Sigmoid colon (tissue), 7 donors: ENCODE measurements at regions of chr9 and their contacts with region 1.

Region 1: DNA sequence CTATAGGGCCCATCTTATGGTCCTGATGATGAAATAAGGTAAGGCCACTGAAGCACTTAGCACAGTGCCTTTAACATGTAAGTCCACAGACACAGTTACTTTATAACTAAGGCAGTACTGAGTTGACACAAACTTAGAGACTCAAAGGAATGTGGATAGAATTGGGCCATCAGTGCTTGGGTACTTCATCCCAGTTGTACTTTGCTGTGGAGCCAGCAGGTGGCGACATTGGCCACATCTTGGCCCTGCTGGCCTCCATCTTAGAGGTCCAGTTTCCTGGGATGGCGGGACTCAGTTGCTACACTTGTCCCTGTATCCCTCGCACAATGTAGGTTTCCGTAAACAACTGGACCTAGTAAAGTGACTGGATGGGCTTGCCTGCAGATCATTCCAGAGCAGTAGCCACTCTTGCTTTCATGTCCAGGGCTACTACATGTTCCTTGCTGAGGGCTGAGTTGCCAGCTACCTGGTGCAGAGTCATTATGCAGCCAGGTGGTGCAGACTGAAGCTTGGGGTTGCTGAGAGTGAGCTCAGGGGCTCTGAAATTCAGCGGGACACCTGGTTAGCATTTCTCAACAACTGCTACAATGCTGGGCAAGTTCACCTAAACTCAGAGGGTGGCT is 10.6 kb downstream of the MTAP start:
- DNase-seq: peak; percentile 80
- H3K4me3 ChIP-seq: no peak overlapping the region
- H3K27ac ChIP-seq: peak overlapping the region; percentile 35 to 52 (median 44)
- H3K4me1 ChIP-seq: peaks cover 0 to 30% (median 15%) of the 10 kb centered on the region in 4 donors
- H3K27me3 ChIP-seq: no peaks in the 10 kb centered on the region
- CTCF ChIP-seq: peak; percentile 65 to 79 (median 74)
- EP300 ChIP-seq: no peak
- POLR2A ChIP-seq: no peak

Region 2: GRCh38 chr9:21728781-21729180 is 84.3 kb before region 1 on chr9:
- intact Hi-C with region 1: no loop called
- DNase-seq: no peak
- H3K4me3 ChIP-seq: no peak overlapping the region
- H3K27ac ChIP-seq: no peak overlapping the region
- H3K4me1 ChIP-seq: no peaks in the 10 kb centered on the region
- H3K27me3 ChIP-seq: no peaks in the 10 kb centered on the region
- CTCF ChIP-seq: no peak
- EP300 ChIP-seq: no peak
- POLR2A ChIP-seq: no peak

Region 3: DNA sequence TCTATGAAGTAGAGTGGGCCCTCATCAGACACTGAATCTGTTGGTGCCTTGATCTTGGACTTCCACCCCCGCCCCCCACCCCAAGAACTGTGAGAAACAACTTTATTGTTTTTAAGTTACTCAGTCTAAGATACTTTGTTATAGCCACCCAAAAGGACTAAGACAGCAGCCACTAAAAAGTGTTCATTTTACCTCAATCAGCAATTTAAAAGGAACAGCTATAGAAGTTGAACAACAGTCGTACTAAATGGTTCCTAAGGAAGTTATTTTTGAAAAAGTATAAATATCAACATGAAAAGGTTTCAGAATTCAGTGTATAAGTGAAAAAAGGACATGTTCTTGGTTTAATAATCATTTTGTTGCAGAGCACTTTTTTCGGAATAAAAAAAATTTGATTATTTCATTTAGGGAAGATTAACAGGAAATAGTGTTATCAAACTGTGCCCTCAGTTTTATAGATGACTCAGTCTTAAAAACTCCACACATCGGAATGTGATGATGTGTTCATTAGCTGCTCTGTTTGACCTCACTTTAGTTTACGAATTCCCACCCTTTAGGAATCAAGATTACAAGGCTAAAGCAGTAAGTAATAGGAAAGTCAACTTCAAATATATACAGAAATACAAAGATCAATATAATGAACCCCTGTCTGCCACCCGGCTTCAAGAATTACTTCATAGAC is 60.6 kb after region 1 on chr9:
- intact Hi-C with region 1: no loop called
- DNase-seq: no peak
- H3K4me3 ChIP-seq: no peak overlapping the region
- H3K27ac ChIP-seq: no peak overlapping the region
- H3K4me1 ChIP-seq: peaks cover 0 to 7% (median 0%) of the 10 kb centered on the region in 4 donors
- H3K27me3 ChIP-seq: no peaks in the 10 kb centered on the region
- CTCF ChIP-seq: no peak
- EP300 ChIP-seq: no peak
- POLR2A ChIP-seq: no peak

Region 4: GRCh38 chr9:22008736-22009562 is 195.9 kb after region 1 on chr9 and contains the start of gene CDKN2B:
- intact Hi-C with region 1: loop called (anchors 2 kb)
- DNase-seq: peak; percentile 97
- H3K4me3 ChIP-seq: peak within 1 kb of the TSS; percentile 40 to 67 (median 54)
- H3K27ac ChIP-seq: peak within 1 kb of the TSS; percentile 75 to 94 (median 83)
- H3K4me1 ChIP-seq: peaks cover 0 to 25% (median 13%) of the 10 kb centered on the region in 4 donors
- H3K27me3 ChIP-seq: peaks cover 13 to 47% (median 28%) of the 10 kb centered on the region in 3 donors
- CTCF ChIP-seq: peak; percentile 50 to 91 (median 75)
- EP300 ChIP-seq: no peak
- POLR2A ChIP-seq: peak; percentile 21 to 72
- total RNA-seq, gene CDKN2B: 3.0 to 6.1 (median 4.5) TPM

Region 5: DNA sequence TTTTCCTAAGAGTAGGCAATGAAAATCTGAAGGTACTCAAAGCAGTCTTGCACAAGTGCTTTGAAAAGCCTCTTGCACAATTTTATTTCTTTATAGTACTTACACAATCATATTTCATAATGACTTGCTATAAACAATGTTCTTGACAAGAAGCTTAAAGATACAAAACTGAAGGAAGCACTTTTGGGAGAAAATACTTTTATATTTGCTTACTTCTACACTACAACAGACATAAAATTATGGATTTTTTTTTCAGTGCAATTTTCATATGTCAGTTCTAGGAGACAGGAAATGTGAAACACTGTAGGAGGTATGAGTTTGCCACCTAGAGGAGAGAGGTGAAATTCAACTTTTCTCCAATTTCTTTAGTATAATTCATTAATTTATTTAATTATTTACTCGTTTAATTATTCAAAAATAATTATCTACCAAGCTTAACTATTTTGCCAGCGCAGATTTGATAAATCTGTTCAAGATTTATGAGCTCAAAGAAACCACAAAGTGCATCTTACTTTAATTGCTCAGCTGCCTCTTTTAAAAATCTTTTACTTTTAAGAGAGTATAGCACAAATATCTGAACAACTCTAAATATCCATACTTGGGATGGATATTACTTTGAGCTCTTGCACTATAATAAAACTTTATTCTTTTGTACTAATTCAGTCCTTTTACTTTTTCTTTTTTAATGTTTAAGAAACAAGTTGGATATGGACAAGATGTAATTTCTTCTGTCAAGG is 225.1 kb after region 1 on chr9:
- intact Hi-C with region 1: loop called (anchors 10 kb)
- DNase-seq: no peak
- H3K4me3 ChIP-seq: no peak overlapping the region
- H3K27ac ChIP-seq: no peak overlapping the region
- H3K4me1 ChIP-seq: peaks cover 0 to 4% (median under 1%) of the 10 kb centered on the region in 4 donors
- H3K27me3 ChIP-seq: no peaks in the 10 kb centered on the region
- CTCF ChIP-seq: peak in 3 of 4 experiments; percentile 9 to 43 (median 27)
- EP300 ChIP-seq: no peak
- POLR2A ChIP-seq: no peak

Region 6: DNA sequence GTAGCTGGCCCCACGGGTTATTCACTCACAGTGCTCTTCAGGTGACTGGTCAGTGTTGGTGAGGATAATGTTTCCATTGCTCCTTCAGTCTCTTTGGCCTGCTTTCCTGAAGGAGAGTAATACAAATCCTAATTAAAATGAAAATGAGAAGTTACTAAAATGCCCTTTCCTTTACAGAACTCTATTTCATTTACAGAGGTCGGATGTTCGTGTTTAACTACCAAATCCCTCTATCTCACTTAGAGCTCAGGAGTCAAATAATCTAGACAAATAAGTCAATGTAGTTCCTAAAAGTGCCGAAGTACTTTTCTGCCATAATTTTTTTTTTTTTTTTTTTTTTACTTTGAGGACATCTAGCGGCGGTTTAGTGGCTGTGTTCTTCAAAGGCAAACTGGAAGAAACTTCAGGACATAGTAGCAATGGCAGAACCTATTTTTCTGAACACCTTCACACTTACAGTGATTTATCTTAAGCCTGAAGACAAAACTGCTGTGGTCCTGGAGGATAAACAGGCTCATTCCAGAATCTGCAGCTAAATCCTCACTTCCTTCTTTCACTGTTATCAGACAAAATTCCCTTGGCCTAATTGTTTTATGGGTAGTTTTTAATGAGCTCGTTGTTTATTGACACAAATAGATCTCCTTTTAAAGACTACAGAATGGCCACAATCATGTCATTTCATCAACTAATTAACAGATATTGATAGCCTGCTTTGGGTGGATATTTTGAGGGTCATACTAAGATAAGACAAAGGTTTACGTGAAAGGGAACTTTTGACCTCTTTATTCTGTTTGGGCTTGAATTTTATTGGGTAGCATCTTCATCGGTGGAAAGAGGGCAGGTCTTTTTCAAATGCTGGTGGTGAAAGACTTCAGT is 426.0 kb after region 1 on chr9:
- intact Hi-C with region 1: loop called (anchors 1 kb)
- DNase-seq: no peak
- H3K4me3 ChIP-seq: no peak overlapping the region
- H3K27ac ChIP-seq: no peak overlapping the region
- H3K4me1 ChIP-seq: peaks cover 0 to 5% (median 0%) of the 10 kb centered on the region in 4 donors
- H3K27me3 ChIP-seq: no peaks in the 10 kb centered on the region
- CTCF ChIP-seq: no peak
- EP300 ChIP-seq: no peak
- POLR2A ChIP-seq: no peak

Region 7: GRCh38 chr9:22452415-22453010 is 639.5 kb after region 1 on chr9:
- intact Hi-C with region 1: loop called (anchors 2 kb)
- DNase-seq: no peak
- H3K4me3 ChIP-seq: no peak overlapping the region
- H3K27ac ChIP-seq: no peak overlapping the region
- H3K4me1 ChIP-seq: peaks cover 0 to 15% (median 3%) of the 10 kb centered on the region in 4 donors
- H3K27me3 ChIP-seq: no peaks in the 10 kb centered on the region
- CTCF ChIP-seq: peak in 3 of 4 experiments; percentile 48 to 72 (median 66)
- EP300 ChIP-seq: no peak
- POLR2A ChIP-seq: no peak